CD4-positive, alpha-beta memory T cell (primary cell): ENCODE measurements at regions of chr11 and their contacts with region 1.

Region 1: DNA sequence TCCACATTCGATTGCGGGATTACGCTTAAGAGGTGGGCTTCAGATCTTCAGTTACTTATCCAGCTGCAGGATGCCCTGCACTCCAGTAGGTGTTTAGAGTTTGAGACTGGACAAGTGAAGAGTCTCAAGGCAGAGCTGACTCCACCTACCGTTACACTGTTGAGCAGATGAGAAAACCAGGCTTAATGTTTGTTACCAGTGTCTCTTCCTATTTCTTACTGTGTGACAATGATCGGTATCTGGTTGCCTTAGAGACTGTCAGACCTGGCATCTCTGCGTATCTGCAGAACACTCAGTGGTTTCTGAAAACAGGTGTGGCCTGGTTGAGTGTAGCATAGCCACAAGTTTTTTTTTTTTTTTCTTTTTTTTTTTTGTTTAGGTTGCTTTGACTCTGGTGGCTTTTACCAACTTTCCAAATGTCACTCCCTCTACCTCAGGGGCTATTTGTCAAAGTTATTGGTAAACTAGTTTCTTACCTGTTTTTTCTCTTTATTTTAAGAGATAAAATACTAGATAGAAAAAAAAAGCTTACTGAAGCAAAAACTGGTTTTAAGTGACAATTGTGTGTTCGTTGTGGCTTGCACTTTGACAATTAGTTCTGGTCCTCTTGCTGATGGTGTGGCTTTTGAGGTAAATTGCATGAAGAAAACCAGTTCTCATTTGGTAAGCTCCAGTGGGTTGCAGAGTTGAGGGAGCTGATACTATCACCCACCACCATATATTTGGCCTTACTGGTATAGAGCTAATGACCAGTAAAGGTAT is 284.8 kb downstream of the ETS1 start:
- DNase-seq: peak; percentile 88 to 96 (median 94)
- H3K4me3 ChIP-seq: peak overlapping the region; percentile 54 to 77
- H3K4me3 Mint-ChIP-seq: peak overlapping the region; percentile 90 to 95 (median 92)
- H3K27ac ChIP-seq: peak overlapping the region; percentile 93
- H3K27ac Mint-ChIP-seq: peak overlapping the region; percentile 95 to 100 (median 98)
- H3K4me1 ChIP-seq: peaks cover 98% of the 10 kb centered on the region
- H3K4me1 Mint-ChIP-seq: peaks cover 72 to 97% (median 86%) of the 10 kb centered on the region in 4 donors
- H3K27me3 ChIP-seq: no peaks in the 10 kb centered on the region
- H3K27me3 Mint-ChIP-seq: no peaks in the 10 kb centered on the region

Region 2: DNA sequence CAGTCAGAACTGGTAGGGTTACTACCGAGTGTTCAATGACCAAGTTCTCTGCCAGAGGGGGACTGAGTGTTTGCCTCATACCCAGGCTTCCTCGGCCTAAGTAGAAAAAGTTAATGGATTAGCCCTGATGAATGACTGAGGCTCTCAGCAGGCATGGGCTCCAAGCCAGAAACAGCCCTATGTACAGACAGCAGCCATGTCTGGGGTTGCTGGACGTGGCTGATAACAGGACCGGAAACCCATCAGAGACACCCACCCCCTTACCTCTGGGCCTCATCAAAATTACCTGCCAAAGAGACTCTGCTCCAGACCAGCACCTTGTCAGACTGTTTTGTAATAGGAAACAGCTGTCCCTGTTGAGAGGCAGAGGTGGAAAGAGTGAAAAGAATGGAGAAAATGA is 66.6 kb before region 1 on chr11:
- CTCF ChIA-PET with region 1: no interaction called
- POLR2A ChIA-PET with region 1: no interaction called
- intact Hi-C with region 1: no loop called
- DNase-seq: no peak
- H3K4me3 ChIP-seq: no peak overlapping the region
- H3K4me3 Mint-ChIP-seq: no peak overlapping the region
- H3K27ac ChIP-seq: no peak overlapping the region
- H3K27ac Mint-ChIP-seq: no peak overlapping the region
- H3K4me1 ChIP-seq: peaks cover 6% of the 10 kb centered on the region
- H3K4me1 Mint-ChIP-seq: peaks cover 8 to 15% (median 10%) of the 10 kb centered on the region in 4 donors
- H3K27me3 ChIP-seq: no peaks in the 10 kb centered on the region
- H3K27me3 Mint-ChIP-seq: no peaks in the 10 kb centered on the region

Region 3: DNA sequence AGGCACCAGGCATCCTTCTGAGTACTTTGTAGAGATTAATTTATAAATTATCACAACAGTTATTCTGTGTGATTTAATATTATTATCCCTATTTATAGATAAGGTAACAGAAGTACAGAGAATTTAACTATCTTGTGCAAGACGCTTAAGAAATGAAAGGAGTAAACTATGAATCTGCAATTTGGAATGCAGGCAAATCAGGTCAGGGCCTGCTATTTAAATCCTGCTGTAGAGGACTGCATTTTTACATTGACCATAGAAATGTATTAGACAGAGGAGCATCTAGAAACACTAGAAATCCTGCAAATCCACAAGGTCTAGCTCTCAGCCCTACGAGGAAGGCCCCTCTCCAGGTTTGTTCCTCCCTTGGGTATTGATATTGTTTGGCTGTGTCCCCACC is 51.5 kb before region 1 on chr11:
- CTCF ChIA-PET with region 1: no interaction called
- POLR2A ChIA-PET with region 1: no interaction called
- intact Hi-C with region 1: no loop called
- DNase-seq: no peak
- H3K4me3 ChIP-seq: no peak overlapping the region
- H3K4me3 Mint-ChIP-seq: no peak overlapping the region
- H3K27ac ChIP-seq: no peak overlapping the region
- H3K27ac Mint-ChIP-seq: no peak overlapping the region
- H3K4me1 ChIP-seq: no peaks in the 10 kb centered on the region
- H3K4me1 Mint-ChIP-seq: no peaks in the 10 kb centered on the region
- H3K27me3 ChIP-seq: peaks cover 3% of the 10 kb centered on the region
- H3K27me3 Mint-ChIP-seq: peaks cover 5 to 7% of the 10 kb centered on the region in 2 donors

Region 4: GRCh38 chr11:128336203-128336602 is 33.6 kb after region 1 on chr11:
- CTCF ChIA-PET with region 1: interaction called, 13 read pairs
- POLR2A ChIA-PET with region 1: interaction called, 541 read pairs
- intact Hi-C with region 1: no loop called
- DNase-seq: no peak
- H3K4me3 ChIP-seq: no peak overlapping the region
- H3K4me3 Mint-ChIP-seq: no peak overlapping the region
- H3K27ac ChIP-seq: no peak overlapping the region
- H3K27ac Mint-ChIP-seq: peak overlapping the region in 4 of 7 donors; percentile 2 to 76 (median 58)
- H3K4me1 ChIP-seq: peaks cover 37% of the 10 kb centered on the region
- H3K4me1 Mint-ChIP-seq: peaks cover 40 to 75% (median 57%) of the 10 kb centered on the region in 4 donors
- H3K27me3 ChIP-seq: no peaks in the 10 kb centered on the region
- H3K27me3 Mint-ChIP-seq: no peaks in the 10 kb centered on the region

Region 5: DNA sequence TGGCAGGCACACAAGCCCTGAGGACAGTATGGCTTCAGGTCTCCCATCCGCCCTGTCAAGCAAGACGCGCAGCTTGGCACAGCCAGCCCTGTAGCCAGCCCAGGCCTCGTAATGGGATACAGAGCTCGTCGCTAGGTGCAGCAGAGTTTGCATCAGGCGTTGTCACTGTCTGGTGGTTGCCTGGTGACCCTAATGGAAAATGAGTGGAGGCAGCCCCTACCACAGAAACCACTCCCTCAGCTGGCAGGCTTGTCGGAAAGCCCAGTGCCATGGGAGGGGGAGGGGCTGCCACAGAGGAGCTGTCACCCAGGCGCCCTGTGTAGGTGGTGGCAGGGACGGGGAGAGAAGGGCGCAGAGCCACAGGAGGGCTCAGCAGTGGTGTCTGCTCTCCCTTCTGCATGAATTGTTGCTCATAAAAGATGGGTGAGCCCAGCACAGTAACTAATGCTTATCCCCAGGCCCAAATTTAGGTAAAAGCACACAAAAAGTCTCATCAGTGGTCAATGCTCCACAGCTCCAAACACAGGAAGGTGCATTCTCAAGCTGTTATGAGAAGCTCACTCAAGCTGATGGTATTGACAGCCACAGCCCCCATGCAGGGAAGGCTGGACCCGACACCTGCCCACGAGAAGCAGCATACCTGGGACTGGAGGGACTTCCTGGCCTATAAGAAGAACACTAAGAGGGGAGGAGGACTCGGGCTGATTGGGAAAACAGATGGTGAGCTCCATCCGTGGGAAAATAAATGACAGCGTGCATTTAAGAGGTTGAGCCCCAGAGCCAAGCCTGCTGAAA is 120.2 kb after region 1 on chr11:
- CTCF ChIA-PET with region 1: no interaction called
- POLR2A ChIA-PET with region 1: interaction called, 10 read pairs
- intact Hi-C with region 1: no loop called
- DNase-seq: peak; percentile 84 to 95 (median 90)
- H3K4me3 ChIP-seq: peak overlapping the region in 1 of 2 donors; percentile 28
- H3K4me3 Mint-ChIP-seq: peak overlapping the region; percentile 48 to 81 (median 72)
- H3K27ac ChIP-seq: peak overlapping the region; percentile 50
- H3K27ac Mint-ChIP-seq: peak overlapping the region; percentile 97 to 100 (median 98)
- H3K4me1 ChIP-seq: peaks cover 26% of the 10 kb centered on the region
- H3K4me1 Mint-ChIP-seq: peaks cover 31 to 45% (median 40%) of the 10 kb centered on the region in 4 donors
- H3K27me3 ChIP-seq: no peaks in the 10 kb centered on the region
- H3K27me3 Mint-ChIP-seq: no peaks in the 10 kb centered on the region

Region 6: GRCh38 chr11:128472128-128473089 is 169.8 kb after region 1 on chr11:
- CTCF ChIA-PET with region 1: interaction called, 13 read pairs
- POLR2A ChIA-PET with region 1: interaction called, 651 read pairs
- intact Hi-C with region 1: loop called (anchors 1 kb)
- DNase-seq: peak in 4 of 5 donors; percentile 51 to 82 (median 57)
- H3K4me3 ChIP-seq: peak overlapping the region; percentile 5 to 27
- H3K4me3 Mint-ChIP-seq: peak overlapping the region; percentile 70 to 93 (median 84)
- H3K27ac ChIP-seq: peak overlapping the region; percentile 94
- H3K27ac Mint-ChIP-seq: peak overlapping the region; percentile 98 to 99 (median 99)
- H3K4me1 ChIP-seq: peaks cover 100% of the 10 kb centered on the region
- H3K4me1 Mint-ChIP-seq: peaks cover 85 to 98% (median 92%) of the 10 kb centered on the region in 4 donors
- H3K27me3 ChIP-seq: no peaks in the 10 kb centered on the region
- H3K27me3 Mint-ChIP-seq: no peaks in the 10 kb centered on the region

Region 7: DNA sequence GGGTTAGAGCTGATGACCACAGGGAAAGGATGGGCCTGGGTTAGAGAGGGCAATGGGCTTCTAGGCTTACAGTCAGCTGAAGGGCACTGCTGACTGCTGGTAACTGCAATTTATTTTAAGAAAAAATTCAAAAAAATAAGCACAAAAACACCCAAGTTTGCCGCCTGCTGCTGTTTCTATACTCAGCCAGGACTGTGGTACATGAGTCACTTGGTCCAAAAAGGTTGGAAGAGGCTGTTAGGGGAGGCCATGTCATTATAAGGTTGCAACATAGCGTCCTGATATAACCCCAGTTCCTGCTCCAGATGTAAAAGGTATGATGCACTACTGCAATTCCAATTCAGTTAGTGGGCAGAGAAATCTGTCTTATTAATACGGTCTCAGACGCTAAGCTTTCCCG is 185.9 kb after region 1 on chr11:
- CTCF ChIA-PET with region 1: interaction called, 4 read pairs
- POLR2A ChIA-PET with region 1: interaction called, 61 read pairs
- intact Hi-C with region 1: no loop called
- DNase-seq: peak in 1 of 5 donors; percentile 85
- H3K4me3 ChIP-seq: peak overlapping the region in 1 of 2 donors; percentile 11
- H3K4me3 Mint-ChIP-seq: peak overlapping the region; percentile 10 to 81 (median 68)
- H3K27ac ChIP-seq: peak overlapping the region; percentile 89
- H3K27ac Mint-ChIP-seq: peak overlapping the region; percentile 90 to 99 (median 97)
- H3K4me1 ChIP-seq: peaks cover 99% of the 10 kb centered on the region
- H3K4me1 Mint-ChIP-seq: peaks cover 92 to 99% (median 95%) of the 10 kb centered on the region in 4 donors
- H3K27me3 ChIP-seq: no peaks in the 10 kb centered on the region
- H3K27me3 Mint-ChIP-seq: no peaks in the 10 kb centered on the region

Region 8: GRCh38 chr11:128512474-128512996 is 209.9 kb after region 1 on chr11:
- CTCF ChIA-PET with region 1: interaction called, 19 read pairs
- POLR2A ChIA-PET with region 1: interaction called, 888 read pairs
- intact Hi-C with region 1: no loop called
- DNase-seq: peak; percentile 31 to 63 (median 52)
- H3K4me3 ChIP-seq: peak overlapping the region; percentile 27 to 92
- H3K4me3 Mint-ChIP-seq: peak overlapping the region; percentile 92 to 100 (median 97)
- H3K27ac ChIP-seq: peak overlapping the region; percentile 89
- H3K27ac Mint-ChIP-seq: peak overlapping the region; percentile 89 to 99 (median 97)
- H3K4me1 ChIP-seq: peaks cover 74% of the 10 kb centered on the region
- H3K4me1 Mint-ChIP-seq: peaks cover 58 to 100% (median 79%) of the 10 kb centered on the region in 4 donors
- H3K27me3 ChIP-seq: no peaks in the 10 kb centered on the region
- H3K27me3 Mint-ChIP-seq: no peaks in the 10 kb centered on the region